Activated CD4-positive, alpha-beta memory T cell treated with anti-CD3 and anti-CD28 coated beads for 36 hours (primary cell): ENCODE measurements at regions of chr16 and their contacts with region 1.

Region 1: DNA sequence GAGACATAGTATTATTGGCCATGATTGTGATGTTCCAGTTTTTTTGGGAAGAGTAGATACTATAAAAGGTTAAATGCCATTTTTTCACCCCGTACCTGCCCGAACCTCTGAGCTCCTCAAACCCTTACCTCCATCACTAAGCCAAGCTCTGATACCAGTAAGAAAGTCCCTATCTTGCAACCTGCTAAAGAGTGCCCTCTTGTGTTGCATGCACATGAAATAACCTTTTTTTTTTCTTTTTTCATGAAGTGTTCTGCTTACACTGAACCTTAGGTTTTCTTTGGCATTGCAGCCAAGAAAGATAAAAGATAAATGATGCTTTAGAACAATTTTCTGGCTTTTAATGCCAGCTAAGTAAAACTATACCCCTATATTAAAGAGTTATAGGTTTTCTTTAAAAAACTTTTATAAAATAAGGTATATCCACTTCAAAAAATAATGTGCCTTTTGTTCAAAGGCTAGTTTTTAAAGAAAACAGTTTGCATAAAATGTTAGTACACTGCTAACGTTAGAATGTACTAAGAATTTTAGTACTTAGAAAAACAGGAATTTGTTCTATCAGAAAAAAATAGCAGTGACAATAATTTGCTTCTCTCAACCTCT is 295.3 kb upstream of the PMFBP1 start:
- DNase-seq: no peak
- H3K4me3 Mint-ChIP-seq: no peak overlapping the region
- H3K27ac Mint-ChIP-seq: no peak overlapping the region
- H3K4me1 Mint-ChIP-seq: no peaks in the 10 kb centered on the region
- H3K27me3 Mint-ChIP-seq: no peaks in the 10 kb centered on the region

Region 2: DNA sequence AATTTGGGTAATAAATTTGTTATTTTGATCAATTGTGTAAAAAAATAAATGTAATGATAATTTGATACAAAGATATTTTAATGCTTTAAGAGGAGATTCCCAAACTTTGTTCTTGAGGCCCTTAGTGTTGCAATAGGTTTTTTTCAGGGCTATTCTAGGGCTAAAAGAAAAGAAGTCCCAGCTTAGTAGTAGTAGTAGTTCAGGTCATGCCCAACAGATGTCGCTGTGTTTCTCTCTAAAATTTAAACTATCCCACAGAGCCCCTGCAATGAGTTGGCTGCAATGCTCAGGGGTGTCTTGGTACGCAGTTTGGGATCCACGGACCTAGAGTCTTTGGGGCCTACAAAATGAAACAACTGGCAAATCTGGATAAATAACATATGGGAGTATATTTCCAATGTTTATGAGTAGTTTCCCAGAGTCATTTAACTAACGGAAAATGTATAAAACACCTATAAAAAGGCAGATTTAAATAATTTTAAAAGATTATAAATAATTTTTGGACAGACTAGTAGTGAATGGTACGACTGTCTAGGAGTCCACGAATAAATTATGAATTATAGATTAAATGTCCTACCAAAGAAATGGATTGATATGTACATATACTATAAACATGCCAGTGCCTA is 66.9 kb before region 1 on chr16:
- CTCF ChIA-PET with region 1: interaction called, 24 read pairs
- POLR2A ChIA-PET with region 1: no interaction called
- intact Hi-C with region 1: loop called (anchors 1 kb)
- DNase-seq: peak; percentile 10
- H3K4me3 Mint-ChIP-seq: no peak overlapping the region
- H3K27ac Mint-ChIP-seq: no peak overlapping the region
- H3K4me1 Mint-ChIP-seq: no peaks in the 10 kb centered on the region
- H3K27me3 Mint-ChIP-seq: no peaks in the 10 kb centered on the region